Right ventricle myocardium inferior (tissue), 1 donor: ENCODE measurements at regions of chrX and their contacts with region 1.

Region 1: DNA sequence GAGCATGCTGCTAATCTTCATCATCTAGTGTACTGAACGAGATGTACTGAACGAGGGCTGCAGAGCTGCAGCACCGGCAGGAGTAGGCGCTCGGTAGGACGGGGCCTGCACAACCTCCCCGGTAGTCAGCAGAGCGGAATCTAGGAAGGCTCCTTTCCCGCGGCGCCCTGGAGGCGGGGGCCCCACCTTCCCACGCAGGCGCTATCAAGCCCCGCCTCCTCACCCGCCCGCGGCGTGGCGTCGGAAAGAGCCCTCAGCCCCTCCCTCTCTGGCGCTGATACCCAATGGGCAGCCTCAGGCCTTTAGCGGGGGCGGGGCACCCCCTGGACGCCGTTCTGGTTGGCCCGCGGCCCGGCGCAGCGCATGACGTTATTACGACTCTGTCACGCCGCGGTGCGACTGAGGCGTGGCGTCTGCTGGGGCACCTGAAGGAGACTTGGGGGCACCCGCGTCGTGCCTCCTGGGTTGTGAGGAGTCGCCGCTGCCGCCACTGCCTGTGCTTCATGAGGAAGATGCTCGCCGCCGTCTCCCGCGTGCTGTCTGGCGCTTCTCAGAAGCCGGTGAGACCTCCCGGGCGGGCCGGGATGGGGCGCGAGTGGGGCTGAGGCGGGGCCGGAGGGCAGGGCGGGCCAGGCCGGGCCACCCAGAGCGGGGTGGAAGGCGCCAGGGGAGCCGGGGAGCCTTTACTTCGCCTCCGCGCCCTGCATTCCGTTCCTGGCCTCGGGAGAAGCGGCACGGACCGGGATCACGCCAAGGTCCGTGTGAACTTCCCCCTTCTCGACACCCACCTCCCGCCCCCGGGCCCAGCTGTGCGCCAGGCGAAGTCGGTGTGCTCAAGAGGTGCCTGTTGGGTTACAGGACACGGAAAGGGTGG is at the start of gene PDHA1:
- DNase-seq: peak; percentile 97
- ATAC-seq: peak; percentile 98
- total RNA-seq, gene PDHA1: 1,288 TPM

Region 2: GRCh38 chrX:18984381-18985185 is 359.2 kb before region 1 on chrX:
- intact Hi-C with region 1: loop called (anchors 5 kb)
- DNase-seq: peak; percentile 91
- ATAC-seq: peak; percentile 96

Region 3: DNA sequence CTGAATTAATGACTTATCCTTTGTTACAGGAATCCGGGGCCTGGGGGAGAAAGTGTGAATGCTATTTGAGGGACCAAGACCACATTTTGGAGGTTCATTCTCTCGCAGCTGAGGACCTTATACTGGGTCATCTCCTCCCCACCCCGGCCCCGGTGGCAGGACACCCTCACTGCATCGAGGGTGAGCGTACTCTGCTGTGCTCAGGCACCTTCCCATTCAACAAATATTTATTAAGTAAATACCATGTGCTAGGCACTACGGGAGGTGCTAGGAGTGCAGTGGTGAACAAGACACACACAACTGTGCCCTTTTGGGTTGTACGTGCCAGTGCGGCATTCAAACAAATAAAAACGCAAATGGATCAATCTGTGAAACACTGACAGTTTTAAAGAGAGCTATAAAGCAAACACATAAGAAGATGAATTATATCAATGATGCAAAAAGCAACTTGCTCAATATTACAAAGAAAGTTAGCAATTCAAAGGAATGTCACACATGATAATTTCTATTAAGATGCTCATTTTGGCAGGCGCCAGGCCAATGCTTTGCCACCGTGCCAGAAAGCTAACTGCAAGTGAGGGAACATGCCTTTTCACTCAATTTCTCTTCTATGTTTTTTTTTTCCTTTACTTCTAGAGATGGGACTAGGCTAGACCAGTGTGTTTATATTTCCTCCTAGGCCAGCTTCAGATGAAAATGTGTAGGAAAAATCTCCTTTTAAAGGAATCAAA is 246.1 kb before region 1 on chrX:
- intact Hi-C with region 1: no loop called
- DNase-seq: no peak
- ATAC-seq: no peak

Region 4: GRCh38 chrX:19863212-19863856 is 519.6 kb after region 1 on chrX:
- intact Hi-C with region 1: no loop called
- DNase-seq: no peak
- ATAC-seq: no peak